ENCODE measurements at regions of chr5 and their contacts with region 1.

Region 1: GRCh38 chr5:41234475-41234874 is 21.1 kb upstream of the C6 start:
- DNase-seq: no peak
- ATAC-seq: peak; percentile 64
- H3K4me3 ChIP-seq: no peak overlapping the region
- H3K27ac ChIP-seq: no peak overlapping the region
- H3K4me1 ChIP-seq: no peaks in the 10 kb centered on the region
- H3K27me3 ChIP-seq: no peaks in the 10 kb centered on the region
- CTCF ChIP-seq: no peak

Region 2: GRCh38 chr5:41186143-41186542 is 48.3 kb before region 1 on chr5:
- CTCF ChIA-PET with region 1: no interaction called
- POLR2A ChIA-PET with region 1: no interaction called
- intact Hi-C with region 1: loop called (anchors 5 kb)
- DNase-seq: no peak
- ATAC-seq: no peak
- H3K4me3 ChIP-seq: no peak overlapping the region
- H3K27ac ChIP-seq: no peak overlapping the region
- H3K4me1 ChIP-seq: no peaks in the 10 kb centered on the region
- H3K27me3 ChIP-seq: no peaks in the 10 kb centered on the region
- CTCF ChIP-seq: no peak

Measured in PC-3 (cell line).